ENCODE measurements at regions of chr2 and their contacts with region 1.

Region 1: GRCh38 chr2:84958135-84959044 is 12.6 kb upstream of the KCMF1 start:
- DNase-seq: peak; percentile 97
- ATAC-seq: peak; percentile 92
- H3K4me3 ChIP-seq: peak overlapping the region in 1 of 2 experiments; percentile 26; a peak in 2 of 4 replicates
- H3K27ac ChIP-seq: peak overlapping the region; percentile 94
- H3K4me1 ChIP-seq: peaks cover 48% of the 10 kb centered on the region
- H3K27me3 ChIP-seq: no peaks in the 10 kb centered on the region
- CTCF ChIP-seq: no peak

Region 2: DNA sequence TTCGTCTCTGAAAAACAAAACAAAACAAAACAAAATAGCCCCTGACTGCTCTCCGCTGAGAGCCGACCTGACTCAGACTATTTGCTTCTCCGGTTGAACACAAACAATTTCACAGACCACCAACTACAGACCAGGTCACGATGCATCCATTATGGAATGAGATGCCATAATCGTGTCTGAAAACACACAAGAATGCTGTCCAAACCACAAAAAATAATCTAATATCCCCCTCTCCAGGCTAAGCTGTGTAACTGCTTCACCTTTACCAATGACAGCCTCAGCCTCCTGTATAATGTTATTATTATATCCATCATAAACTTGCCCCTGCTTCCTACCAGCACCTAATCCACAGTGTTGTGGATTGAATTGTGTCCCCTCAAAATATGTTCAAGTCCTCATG is 327.3 kb before region 1 on chr2:
- CTCF ChIA-PET with region 1: no interaction called
- POLR2A ChIA-PET with region 1: interaction called, 15 read pairs
- in situ Hi-C with region 1: no loop called
- intact Hi-C with region 1: no loop called
- DNase-seq: peak; percentile 10
- ATAC-seq: peak; percentile 81; the same call in 1 of the 2 replicates
- H3K4me3 ChIP-seq: no peak overlapping the region
- H3K27ac ChIP-seq: no peak overlapping the region
- H3K4me1 ChIP-seq: no peaks in the 10 kb centered on the region
- H3K27me3 ChIP-seq: peaks cover 4% of the 10 kb centered on the region; the same call in 1 of the 2 replicates
- CTCF ChIP-seq: peak; percentile 69

Region 3: DNA sequence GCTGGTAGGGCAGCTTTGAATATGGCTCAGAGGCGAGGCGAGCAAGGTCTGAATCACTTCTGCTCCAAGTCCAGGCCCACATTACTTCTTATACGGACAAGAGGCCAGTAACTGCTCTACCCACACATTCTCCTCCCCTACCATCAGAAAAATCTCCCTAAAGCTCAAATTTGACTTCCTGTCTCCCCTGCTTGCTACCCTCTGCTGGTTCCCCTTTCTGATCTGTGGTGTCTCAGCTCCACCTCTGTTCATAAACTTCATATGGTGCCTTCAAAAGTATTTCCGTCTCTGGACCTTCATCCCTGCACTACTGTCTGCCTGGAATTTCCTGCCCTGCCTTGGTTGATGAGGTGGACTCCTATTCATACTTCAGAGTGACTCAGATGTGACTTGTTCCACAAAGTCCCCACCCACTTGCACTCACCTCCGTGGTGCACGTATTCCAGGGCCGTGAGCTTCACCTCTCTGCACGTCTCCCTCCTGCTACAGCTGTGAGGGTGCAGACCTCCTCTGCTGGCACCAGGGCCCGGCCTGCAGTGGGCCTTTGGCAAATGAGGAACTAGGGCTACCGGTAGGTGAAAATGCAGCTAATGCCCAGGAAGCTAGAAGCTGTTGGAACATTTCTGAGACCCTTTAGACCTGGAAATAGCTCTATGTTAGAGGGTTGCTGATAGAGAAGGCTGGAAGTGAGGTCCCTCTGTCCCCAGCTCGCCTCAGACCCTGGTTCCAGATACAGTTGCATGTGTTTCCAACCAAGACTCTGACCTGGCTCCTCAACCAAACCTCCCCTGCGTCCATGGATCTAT is 12.0 kb before region 1 on chr2:
- CTCF ChIA-PET with region 1: no interaction called
- POLR2A ChIA-PET with region 1: interaction called, 12 read pairs
- in situ Hi-C with region 1: no loop called
- intact Hi-C with region 1: no loop called
- DNase-seq: peak; percentile 91
- ATAC-seq: peak; percentile 96
- H3K4me3 ChIP-seq: peak overlapping the region in 1 of 2 experiments; percentile 23; a peak in 1 of 4 replicates
- H3K27ac ChIP-seq: peak overlapping the region; percentile 90
- H3K4me1 ChIP-seq: peaks cover 18% of the 10 kb centered on the region
- H3K27me3 ChIP-seq: no peaks in the 10 kb centered on the region
- CTCF ChIP-seq: no peak

Region 4: DNA sequence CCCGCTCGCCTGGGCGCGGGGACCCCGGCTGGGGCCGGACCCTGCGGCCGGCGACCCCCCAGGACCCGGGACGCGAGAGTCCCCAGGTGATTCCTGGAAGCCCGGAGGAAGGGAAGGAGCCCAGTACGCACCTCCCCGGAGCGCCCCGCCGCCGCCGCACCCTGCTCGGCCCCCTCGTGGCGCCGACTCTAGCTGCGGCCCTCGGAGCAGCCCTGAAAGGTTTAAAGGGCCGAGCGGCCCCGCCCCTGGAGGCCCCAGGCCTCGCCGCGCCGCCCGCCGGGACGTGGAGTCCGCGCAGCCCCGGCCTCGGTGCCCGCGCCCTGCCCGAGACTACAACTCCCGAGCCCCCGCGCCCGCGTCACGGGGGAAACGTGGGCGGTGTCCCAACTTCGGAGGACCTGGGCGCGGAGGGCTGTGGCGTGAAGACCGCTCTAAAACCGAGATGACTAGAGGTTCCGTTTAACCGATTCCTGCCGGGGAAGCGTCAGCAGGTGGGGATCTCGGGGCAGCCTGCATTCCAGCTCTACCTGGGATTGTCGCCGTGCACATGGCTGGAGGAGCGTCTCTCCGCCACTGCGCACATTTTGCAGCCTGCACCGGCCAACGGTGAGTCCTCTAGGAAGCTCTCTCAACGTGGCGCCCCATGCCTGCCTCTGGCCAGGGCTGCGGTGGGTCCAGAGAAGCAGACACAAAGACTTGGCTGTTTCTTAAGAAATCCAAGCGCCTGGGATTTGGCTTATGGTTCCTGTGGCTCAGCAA is 644.3 kb after region 1 on chr2 and contains the start of gene TMEM150A:
- CTCF ChIA-PET with region 1: no interaction called
- POLR2A ChIA-PET with region 1: no interaction called
- in situ Hi-C with region 1: no loop called
- intact Hi-C with region 1: no loop called
- DNase-seq: no peak
- ATAC-seq: peak; percentile 97
- H3K4me3 ChIP-seq: peak within 1 kb of the TSS; percentile 97 to 99
- H3K27ac ChIP-seq: peak within 1 kb of the TSS; percentile 88
- H3K4me1 ChIP-seq: peaks cover 37% of the 10 kb centered on the region
- H3K27me3 ChIP-seq: no peaks in the 10 kb centered on the region
- CTCF ChIP-seq: no peak
- total RNA-seq, gene TMEM150A: 30.4 TPM